ENCODE measurements at regions of chr12 and their contacts with region 1.

Region 1: DNA sequence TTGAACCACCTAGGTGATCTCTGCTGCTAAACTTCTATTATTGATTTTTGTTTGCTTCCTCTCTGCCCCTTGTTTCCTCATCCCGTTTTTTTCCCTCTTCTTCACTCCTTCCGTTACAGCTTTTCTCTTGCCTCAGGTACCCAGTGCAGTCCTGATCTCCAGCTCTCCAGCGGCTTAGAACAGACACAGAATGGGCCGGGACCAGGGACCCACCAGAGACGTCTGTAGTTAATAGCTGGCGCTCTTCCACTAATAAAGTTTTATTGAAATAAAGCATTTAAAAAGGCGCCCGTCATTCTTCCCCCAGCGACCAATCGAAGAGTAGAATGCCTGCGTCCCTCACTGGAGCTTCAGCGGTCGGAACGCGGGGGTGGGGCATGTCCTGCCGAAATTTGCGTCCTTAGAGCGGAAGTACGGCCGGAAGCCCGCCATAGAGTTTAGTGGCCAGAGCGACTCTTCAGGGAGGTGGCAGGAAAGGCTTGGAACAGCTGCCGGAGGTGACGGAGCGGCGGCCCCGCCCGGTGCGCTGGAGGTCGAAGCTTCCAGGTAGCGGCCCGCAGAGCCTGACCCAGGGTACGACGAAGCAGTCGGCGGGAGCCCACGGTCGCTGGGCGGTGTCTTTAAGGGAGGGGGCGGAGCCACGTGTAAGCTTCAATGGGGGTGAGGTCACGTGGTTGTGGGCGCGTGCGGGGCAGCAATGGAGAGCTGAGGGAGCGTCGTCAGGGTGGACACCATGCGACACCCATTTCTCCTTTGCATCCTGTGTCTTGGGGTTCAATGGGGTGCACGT is at the start of gene COPS7A:
- DNase-seq: peak; percentile 99 to 100 (median 100)
- H3K4me3 ChIP-seq: peak within 1 kb of the TSS; percentile 37 to 91 (median 75)
- H3K27ac ChIP-seq: peak within 1 kb of the TSS; percentile 51 to 87
- H3K4me1 ChIP-seq: peaks cover 8 to 23% (median 13%) of the 10 kb centered on the region in 4 experiments
- H3K27me3 ChIP-seq: no peaks in the 10 kb centered on the region

Region 2: DNA sequence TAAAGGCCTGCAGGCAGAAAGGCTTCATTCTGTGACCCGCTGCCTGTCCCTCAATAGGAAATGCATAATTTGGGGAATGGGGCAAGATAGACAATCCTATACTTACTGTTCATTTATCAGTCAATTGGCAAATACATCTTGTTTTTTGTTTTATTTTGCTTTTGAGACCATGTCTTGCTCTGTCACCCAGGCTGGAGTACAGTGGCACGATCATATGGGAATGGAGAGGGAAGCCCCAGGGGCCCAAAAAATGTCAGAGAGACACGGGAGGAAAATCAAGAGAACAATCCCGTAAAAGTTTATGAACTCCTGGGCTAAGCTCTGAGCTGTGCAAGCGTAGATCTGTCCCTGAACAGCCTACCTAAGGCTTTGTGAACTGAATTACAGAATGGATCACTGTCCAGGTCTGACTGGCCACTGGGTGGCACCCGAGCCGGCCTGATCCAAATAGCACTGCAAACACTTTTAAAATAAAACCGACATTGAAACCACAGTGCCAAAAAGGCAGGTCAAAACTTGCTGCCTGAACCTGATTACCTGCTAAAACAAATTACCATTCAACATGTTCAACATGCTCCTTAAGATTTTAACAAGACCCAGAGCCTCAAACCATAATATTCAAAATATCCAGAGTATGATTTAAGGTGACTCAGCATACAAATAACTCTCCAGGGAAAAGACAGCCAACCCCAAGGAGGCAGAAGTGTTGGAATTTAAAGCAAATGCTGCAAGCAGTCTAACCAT is 11.8 kb after region 1 on chr12:
- CTCF ChIA-PET with region 1: interaction called, 26 read pairs
- POLR2A ChIA-PET with region 1: no interaction called
- DNase-seq: peak; percentile 59 to 74 (median 72)
- H3K4me3 ChIP-seq: no peak overlapping the region
- H3K27ac ChIP-seq: peak overlapping the region in 1 of 2 experiments; percentile 43
- H3K4me1 ChIP-seq: peaks cover 0 to 5% (median 2%) of the 10 kb centered on the region in 4 experiments
- H3K27me3 ChIP-seq: no peaks in the 10 kb centered on the region

Measured in common myeloid progenitor, CD34-positive (primary cell).